Naive thymus-derived CD4-positive, alpha-beta T cell (primary cell): ENCODE measurements at regions of chr20 and their contacts with region 1.

Region 1: DNA sequence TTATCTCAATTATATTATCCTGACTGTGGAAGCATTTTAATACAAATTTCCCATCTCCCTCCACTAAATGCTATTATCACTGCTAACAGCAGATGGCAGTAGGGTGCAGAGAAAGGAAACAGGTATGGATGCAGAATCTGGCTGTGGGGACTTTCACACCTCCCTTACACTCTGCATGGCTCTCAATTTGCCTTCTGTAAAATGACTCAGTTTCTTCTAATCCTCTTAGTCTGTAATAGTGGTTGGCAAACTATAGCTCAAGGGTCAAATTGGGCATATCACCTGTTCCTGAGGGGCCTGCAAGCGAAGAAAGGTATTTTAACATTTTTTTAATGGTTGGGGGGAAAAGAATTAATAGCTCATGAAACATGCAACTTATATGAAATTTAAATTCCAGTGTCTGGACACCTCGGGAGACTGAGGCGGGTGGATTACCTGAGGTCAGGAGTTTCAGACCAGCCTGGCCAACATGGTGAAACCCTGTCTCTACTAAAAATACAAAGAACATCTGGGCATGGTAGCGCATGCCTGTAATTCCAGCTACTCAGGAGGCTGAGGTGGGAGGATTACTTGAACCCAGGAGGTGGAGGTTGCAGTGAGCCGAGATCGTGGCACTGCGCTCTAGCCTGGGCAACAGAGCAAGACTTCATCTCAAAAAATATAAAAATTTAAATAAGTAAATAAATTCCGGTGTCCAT is 83.5 kb downstream of the ZMYND8 start:
- DNase-seq: peak in 8 of 9 donors; percentile 32 to 72 (median 56)
- ATAC-seq: peak; percentile 91
- H3K4me3 ChIP-seq: no peak overlapping the region
- H3K4me3 Mint-ChIP-seq: peak overlapping the region in 1 of 10 donors; percentile 35
- H3K27ac ChIP-seq: no peak overlapping the region
- H3K27ac Mint-ChIP-seq: peak overlapping the region in 6 of 9 donors; percentile 4 to 94 (median 59)
- H3K4me1 ChIP-seq: peaks cover 0 to 2% of the 10 kb centered on the region in 2 donors
- H3K4me1 Mint-ChIP-seq: peaks cover 0 to 43% (median 13%) of the 10 kb centered on the region in 7 donors
- H3K27me3 ChIP-seq: no peaks in the 10 kb centered on the region
- H3K27me3 Mint-ChIP-seq: no peaks in the 10 kb centered on the region

Region 2: DNA sequence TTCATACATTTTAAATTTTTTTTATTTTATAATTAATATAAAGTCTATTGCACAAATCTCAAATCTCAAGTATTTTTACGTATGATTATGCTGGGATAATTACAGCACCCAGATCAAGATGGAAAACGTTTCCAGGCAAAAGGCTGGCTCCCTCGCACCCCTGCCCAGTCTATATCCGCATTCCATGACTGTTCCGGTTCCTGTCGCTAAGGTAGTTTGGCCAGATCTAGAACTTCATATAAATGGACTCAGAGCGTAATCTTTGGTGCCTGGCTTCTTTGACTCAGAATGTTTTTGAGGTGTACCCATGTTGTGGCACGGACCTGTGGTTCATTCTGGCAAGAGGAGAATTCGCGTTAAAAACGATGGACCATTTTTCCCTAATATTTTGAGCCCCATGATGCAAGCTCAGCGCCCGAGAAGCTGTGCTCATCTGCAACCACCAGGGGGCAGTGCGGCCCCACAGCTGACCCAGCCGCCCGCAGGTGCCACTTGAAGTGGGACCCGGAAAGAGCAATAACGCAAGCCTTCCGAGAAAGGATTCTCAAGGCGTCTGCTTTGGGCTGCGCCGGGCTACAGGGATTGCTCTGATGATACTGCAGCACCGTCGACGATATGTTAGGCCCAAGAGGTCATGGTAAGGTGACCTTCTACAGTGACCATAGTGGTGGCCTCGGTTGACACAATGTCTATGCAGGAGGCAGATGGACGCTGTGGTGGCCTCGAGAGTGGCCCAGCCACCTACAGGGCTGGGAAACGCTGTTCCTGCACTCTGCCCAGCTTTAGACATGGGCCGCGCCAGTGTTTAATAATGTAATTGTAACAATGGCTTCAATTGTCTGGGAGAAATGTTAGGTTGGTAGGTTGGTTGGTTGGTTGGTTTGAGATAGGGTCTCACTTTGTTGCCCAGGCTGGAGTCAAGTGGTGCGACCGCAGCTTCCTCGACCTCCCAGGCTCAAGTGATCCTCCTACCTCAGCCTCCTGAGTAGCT is 76.7 kb before region 1 on chr20:
- CTCF ChIA-PET with region 1: interaction called, 6 read pairs
- POLR2A ChIA-PET with region 1: no interaction called
- intact Hi-C with region 1: loop called (anchors 1 to 2 kb)
- DNase-seq: peak; percentile 38 to 85 (median 54)
- ATAC-seq: peak; percentile 91
- H3K4me3 ChIP-seq: no peak overlapping the region
- H3K4me3 Mint-ChIP-seq: peak overlapping the region in 1 of 10 donors; percentile 38
- H3K27ac ChIP-seq: no peak overlapping the region
- H3K27ac Mint-ChIP-seq: no peak overlapping the region
- H3K4me1 ChIP-seq: no peaks in the 10 kb centered on the region
- H3K4me1 Mint-ChIP-seq: peaks cover 0 to 12% (median 0%) of the 10 kb centered on the region in 7 donors
- H3K27me3 ChIP-seq: no peaks in the 10 kb centered on the region
- H3K27me3 Mint-ChIP-seq: peaks cover 0 to 8% (median 0%) of the 10 kb centered on the region in 5 donors

Region 3: DNA sequence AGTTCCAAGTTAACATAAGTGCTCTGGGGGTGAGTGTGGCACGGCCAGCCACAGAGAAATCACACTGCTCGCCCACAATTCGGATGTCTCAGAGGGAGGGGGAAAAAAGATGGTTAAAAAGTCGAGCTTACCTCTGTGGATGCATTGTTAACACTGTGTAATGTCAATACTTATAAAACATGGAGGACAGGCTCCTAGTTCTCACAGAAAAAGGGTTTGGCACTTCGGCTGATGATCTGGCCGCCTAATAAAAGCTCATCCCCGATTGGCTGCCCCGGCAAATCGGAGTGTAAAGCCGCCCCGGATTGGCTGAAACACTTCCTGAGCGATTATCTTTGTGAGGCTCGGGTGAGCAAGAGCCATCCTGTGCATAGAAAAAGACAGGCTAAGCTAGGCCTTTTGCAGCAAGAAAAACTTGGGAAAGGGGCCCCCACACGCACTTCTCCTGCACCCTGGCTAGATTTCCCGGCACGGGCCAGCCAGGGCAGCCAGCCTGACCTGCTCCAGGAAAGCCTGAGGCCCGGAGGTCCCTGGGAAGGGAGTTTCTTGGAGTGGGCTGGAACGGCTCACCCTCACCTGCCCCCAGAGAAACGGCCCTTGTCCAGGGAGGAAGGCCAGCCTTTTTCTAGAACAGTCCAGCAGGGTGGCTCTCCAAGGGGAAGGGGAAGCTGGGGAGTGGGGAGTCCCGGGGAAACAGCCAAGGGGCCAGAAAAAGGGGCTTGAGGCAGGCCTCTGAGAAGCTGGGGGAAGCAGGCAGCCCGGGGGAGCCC is 83.7 kb after region 1 on chr20 and contains the start of gene ZMYND8:
- CTCF ChIA-PET with region 1: interaction called, 21 read pairs
- POLR2A ChIA-PET with region 1: no interaction called
- intact Hi-C with region 1: no loop called
- DNase-seq: peak; percentile 88 to 100 (median 98)
- ATAC-seq: peak; percentile 91
- H3K4me3 ChIP-seq: peak within 1 kb of the TSS; percentile 75
- H3K4me3 Mint-ChIP-seq: peak within 1 kb of the TSS in 4 of 10 donors; percentile 88 to 95 (median 92)
- H3K27ac ChIP-seq: peak within 1 kb of the TSS; percentile 86
- H3K27ac Mint-ChIP-seq: peak within 1 kb of the TSS in 7 of 9 donors; percentile 97 to 100 (median 99)
- H3K4me1 ChIP-seq: peaks cover 47 to 65% of the 10 kb centered on the region in 2 donors
- H3K4me1 Mint-ChIP-seq: peaks cover 51 to 74% (median 53%) of the 10 kb centered on the region in 7 donors
- H3K27me3 ChIP-seq: no peaks in the 10 kb centered on the region
- H3K27me3 Mint-ChIP-seq: no peaks in the 10 kb centered on the region
- total RNA-seq, gene ZMYND8: 54.5 to 83.0 (median 68.5) TPM

Region 4: DNA sequence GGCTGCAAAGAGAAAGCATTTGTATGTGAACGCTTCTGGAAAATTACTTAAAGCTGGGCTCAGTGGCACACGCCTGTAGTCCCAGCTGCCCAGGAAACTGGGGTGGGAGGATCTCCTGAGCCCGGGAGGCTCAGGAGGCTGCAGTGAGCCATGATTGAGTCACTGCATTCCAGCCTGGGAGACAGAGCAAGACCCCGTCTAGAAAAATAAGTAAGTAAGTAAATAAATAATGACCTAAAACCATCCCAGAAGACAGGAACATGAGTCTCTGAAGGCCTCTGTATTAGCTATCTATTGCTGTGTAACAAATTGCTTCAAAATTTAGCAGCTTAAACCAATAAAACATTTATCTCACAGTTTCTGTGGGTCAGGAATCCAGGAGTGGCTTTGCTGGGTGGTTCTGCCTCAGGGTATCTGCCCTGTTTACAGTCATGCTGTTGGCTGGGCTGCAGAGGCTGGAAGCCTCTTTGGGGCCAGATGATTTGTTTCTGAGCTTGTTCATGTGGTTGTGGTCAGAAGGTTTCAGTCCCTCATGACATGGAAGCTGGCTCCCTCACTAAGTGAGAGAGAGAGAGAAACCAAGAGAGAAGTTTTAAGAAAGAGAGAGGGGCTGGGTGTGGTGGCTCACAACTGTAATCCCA is 180.2 kb after region 1 on chr20:
- CTCF ChIA-PET with region 1: no interaction called
- POLR2A ChIA-PET with region 1: no interaction called
- intact Hi-C with region 1: loop called in 1 of 2 experiments (anchors 5 kb)
- DNase-seq: peak in 1 of 9 donors; percentile 48
- ATAC-seq: no peak
- H3K4me3 ChIP-seq: no peak overlapping the region
- H3K4me3 Mint-ChIP-seq: peak overlapping the region in 1 of 10 donors; percentile 58
- H3K27ac ChIP-seq: no peak overlapping the region
- H3K27ac Mint-ChIP-seq: peak overlapping the region in 1 of 9 donors; percentile 85
- H3K4me1 ChIP-seq: no peaks in the 10 kb centered on the region
- H3K4me1 Mint-ChIP-seq: peaks cover 0 to 46% (median 0%) of the 10 kb centered on the region in 7 donors
- H3K27me3 ChIP-seq: no peaks in the 10 kb centered on the region
- H3K27me3 Mint-ChIP-seq: peaks cover 0 to 2% (median 0%) of the 10 kb centered on the region in 5 donors

Region 5: GRCh38 chr20:47620808-47621805 is 348.1 kb after region 1 on chr20:
- CTCF ChIA-PET with region 1: interaction called, 29 read pairs
- POLR2A ChIA-PET with region 1: no interaction called
- intact Hi-C with region 1: loop called (anchors 1 kb)
- DNase-seq: peak in 7 of 9 donors; percentile 18 to 61 (median 43)
- ATAC-seq: peak; percentile 58
- H3K4me3 ChIP-seq: no peak overlapping the region
- H3K4me3 Mint-ChIP-seq: no peak overlapping the region
- H3K27ac ChIP-seq: no peak overlapping the region
- H3K27ac Mint-ChIP-seq: peak overlapping the region in 6 of 9 donors; percentile 2 to 44 (median 10)
- H3K4me1 ChIP-seq: no peaks in the 10 kb centered on the region
- H3K4me1 Mint-ChIP-seq: peaks cover 6 to 52% (median 23%) of the 10 kb centered on the region in 7 donors
- H3K27me3 ChIP-seq: no peaks in the 10 kb centered on the region
- H3K27me3 Mint-ChIP-seq: no peaks in the 10 kb centered on the region